ENCODE measurements at regions of chr18 and their contacts with region 1.

Region 1: DNA sequence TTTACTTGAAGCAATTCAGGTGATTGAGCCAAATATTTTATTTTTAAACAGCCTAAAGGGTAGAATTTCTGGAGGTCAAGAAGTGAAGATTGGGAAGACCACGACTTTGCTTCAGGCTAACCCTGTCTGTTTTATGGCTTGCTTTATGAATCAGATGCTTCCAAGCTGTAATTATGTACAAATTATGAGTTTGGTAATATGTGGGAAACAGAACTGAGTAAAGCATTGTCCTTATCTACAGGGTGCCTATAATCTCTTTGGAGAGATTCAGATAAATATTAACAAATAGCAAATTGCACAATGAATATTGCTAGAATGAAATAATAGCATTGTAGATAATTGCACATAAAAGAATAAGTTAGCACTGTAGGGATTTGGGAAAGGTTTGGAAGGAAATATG is 539.4 kb upstream of the CDH2 start:
- DNase-seq: no peak

Region 2: DNA sequence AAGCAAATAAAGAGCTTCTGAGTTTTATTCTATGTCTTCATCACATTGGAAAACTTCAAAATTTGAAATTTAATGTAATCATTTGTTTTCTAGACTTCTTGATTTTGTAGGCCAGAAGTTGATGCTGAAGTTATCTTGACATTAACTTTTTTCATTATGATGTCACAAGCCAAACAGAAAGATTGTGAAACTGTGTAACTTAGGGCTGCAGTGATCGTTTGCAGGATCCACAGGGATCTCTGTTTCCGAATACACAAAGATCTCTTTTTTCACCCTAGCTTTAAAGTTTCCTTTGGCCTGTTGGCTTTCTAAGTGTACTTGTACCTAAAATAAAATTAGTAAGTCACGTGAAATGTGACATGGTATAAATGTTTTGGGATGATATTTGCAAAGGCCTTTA is 55.5 kb after region 1 on chr18:
- intact Hi-C with region 1: loop called in 1 of 2 experiments (anchors 10 kb)
- DNase-seq: no peak